Activated B cell treated with CpG ODN at 0.5 μM for 24 hours (primary cell): ENCODE measurements at regions of chr2 and their contacts with region 1.

Region 1: GRCh38 chr2:191245046-191245868 is at the start of gene MYO1B:
- DNase-seq: peak; percentile 58
- ATAC-seq: peak; percentile 77
- H3K4me3 Mint-ChIP-seq: peak within 1 kb of the TSS; percentile 77
- H3K27ac Mint-ChIP-seq: no peak within 1 kb of the TSS
- H3K4me1 Mint-ChIP-seq: peaks cover 16% of the 10 kb centered on the region
- H3K27me3 Mint-ChIP-seq: peaks cover 4% of the 10 kb centered on the region
- CTCF ChIP-seq: no peak
- total RNA-seq, gene MYO1B: 2.5 and 2.7 TPM in 2 replicates

Region 2: GRCh38 chr2:191274413-191274815 is 29.2 kb after region 1 on chr2:
- CTCF ChIA-PET with region 1: no interaction called
- POLR2A ChIA-PET with region 1: no interaction called
- intact Hi-C with region 1: loop called (anchors 2 kb)
- DNase-seq: no peak
- ATAC-seq: peak; percentile 79
- H3K4me3 Mint-ChIP-seq: peak overlapping the region; percentile 72
- H3K27ac Mint-ChIP-seq: peak overlapping the region; percentile 78
- H3K4me1 Mint-ChIP-seq: peaks cover 72% of the 10 kb centered on the region
- H3K27me3 Mint-ChIP-seq: no peaks in the 10 kb centered on the region
- CTCF ChIP-seq: no peak

Region 3: DNA sequence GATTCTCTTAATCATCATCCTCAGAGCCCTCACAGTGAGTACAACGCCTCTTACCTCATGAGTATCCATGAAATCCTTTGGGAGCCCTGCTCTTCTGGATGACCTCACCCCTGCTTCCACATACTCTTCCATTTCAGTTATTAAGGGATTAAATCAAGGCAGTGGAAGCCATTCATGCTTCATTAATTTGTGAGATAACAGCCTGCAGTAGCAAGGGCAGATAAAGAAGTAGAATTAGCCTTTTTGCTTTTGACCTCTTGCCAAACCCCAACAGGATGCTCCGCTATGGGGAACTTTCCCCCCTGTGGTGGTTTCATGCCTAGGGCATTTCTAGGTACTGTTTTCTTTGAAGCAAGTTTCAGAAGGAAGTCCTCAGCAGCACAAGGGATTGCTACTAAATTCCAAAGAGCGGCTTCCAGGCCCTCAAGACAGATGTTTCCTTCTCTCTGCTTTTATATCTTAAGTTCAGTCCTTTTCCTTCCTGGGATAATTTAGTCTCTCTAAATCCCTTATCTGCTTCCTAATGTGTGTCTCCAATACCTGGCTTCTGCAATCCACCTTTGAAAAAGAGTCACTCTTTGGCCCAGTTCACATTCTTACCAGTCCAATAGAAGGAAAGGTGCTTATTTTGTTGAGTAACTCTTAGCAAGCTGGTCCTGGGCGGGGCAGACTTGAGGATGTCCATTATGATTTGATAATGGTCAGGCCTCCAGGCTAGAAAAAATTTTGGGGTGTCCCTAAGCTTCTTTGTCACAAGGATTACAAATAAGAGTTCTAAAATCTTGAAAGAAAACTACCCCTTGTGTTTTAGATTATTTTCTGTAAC is 76.8 kb after region 1 on chr2:
- CTCF ChIA-PET with region 1: no interaction called
- POLR2A ChIA-PET with region 1: no interaction called
- intact Hi-C with region 1: loop called (anchors 5 kb)
- DNase-seq: no peak
- ATAC-seq: peak; percentile 78
- H3K4me3 Mint-ChIP-seq: peak overlapping the region; percentile 4
- H3K27ac Mint-ChIP-seq: no peak overlapping the region
- H3K4me1 Mint-ChIP-seq: peaks cover 48% of the 10 kb centered on the region
- H3K27me3 Mint-ChIP-seq: no peaks in the 10 kb centered on the region
- CTCF ChIP-seq: no peak

Region 4: DNA sequence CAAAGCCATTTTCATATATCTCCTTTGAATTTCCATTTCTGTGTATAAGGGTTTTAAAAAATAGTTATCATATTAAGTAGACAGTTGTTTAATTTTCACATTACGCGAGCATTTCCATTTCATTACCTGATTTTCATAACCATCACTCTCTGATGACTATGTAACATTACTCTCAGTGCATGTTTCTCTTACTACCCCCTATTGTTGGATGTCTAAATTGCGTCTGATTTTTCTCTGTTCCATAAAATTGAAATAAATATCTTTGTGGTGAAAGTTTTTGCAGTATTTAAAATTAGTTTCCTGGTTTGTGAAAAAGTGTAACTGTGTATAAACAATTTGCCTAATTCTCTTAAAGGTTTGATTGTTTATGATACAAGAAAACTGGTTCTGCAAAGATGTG is 123.8 kb after region 1 on chr2:
- CTCF ChIA-PET with region 1: interaction called, 3 read pairs
- POLR2A ChIA-PET with region 1: no interaction called
- intact Hi-C with region 1: loop called (anchors 2 kb)
- DNase-seq: no peak
- ATAC-seq: no peak
- H3K4me3 Mint-ChIP-seq: no peak overlapping the region
- H3K27ac Mint-ChIP-seq: no peak overlapping the region
- H3K4me1 Mint-ChIP-seq: no peaks in the 10 kb centered on the region
- H3K27me3 Mint-ChIP-seq: no peaks in the 10 kb centered on the region
- CTCF ChIP-seq: no peak